BJ (cell line): ENCODE measurements at regions of chr11 and their contacts with region 1.

Region 1: DNA sequence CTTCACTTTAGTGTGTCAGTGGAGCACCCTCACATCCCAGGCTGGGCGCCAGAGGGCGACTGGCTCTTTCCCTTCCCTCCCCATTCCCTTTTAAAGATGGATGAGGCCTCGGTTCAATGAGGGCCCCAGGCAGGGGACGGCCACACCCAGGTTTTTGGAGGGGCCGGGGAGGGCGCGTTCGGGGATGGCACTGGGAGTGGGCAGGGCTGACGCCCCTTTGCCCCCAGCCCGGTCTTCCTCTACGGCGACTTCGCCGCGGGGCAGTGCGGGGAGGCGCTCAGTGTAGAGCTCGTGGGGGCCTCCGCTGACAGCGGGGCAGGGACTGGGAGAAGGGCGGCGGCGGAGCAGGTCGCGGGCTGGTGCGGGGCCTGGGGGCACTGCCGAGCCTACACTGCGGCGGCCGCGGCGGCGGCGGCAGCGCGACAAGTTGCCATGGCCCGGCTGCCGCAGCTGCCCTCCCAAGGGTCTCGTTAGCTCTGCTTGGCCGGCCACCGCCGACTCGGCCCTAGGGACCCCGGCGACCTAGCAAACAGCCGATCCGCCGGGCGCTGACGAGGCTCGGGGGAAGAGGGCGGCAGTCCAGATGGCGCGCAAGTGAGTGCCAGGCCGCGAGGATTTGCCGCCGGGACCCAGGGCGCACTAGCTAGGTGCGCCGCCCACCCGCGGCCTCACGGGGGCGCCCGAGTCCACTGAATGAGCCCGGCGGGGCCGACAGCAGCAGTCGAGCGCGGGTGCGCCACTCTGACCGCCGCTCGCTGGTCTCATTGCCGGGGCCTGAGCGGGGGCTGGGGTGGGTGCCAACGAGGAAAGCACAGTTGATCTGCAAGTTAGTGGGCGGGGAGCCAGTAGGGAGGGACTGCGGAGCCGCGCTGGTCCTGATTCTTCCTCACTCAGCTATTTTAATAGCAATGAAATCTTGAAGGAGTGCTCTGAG is 92.7 kb downstream of the RRM1 start:
- DNase-seq: peak; percentile 39
- H3K4me3 ChIP-seq: peak overlapping the region; percentile 60
- H3K27me3 ChIP-seq: no peaks in the 10 kb centered on the region
- CTCF ChIP-seq: peak; percentile 83

Region 2: DNA sequence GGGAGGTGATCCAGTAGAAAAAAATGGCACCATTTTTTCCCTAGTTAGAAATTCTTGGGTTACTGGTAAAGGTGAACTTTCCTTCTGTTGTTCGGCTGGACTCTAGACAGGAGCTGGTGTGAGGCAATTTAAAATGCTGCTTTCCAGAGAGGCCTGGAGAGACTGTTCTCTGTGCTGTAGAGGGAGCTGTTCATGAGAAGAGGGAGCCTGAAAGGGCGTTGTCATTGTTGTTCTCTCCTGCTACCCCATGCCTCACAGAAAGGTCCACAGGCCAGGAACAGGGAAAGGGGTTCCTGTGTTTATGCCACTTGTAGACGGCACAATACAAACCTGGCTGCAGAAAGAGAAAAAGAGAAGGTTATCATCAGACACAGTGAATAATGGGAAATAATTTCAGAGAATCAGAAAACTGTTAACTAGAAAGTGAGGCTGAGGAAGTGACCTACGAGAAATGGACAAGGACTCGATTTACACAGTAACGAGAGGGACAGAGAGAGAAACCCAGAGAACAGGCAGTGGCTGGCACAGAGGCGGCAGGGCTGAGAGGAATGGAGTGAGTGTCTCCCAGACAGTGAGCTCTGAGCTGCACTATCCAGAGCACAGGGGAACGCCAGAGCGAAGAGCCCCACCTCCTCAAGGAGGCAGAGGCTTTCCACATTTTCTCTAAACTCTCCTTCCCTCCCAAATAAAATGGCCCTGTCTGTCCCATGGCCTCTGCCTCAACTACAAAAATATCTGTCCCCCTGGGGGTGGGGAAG is 16.5 kb after region 1 on chr11:
- CTCF ChIA-PET with region 1: interaction called, 27 read pairs
- POLR2A ChIA-PET with region 1: interaction called, 4 read pairs
- DNase-seq: no peak
- H3K4me3 ChIP-seq: no peak overlapping the region
- H3K27me3 ChIP-seq: no peaks in the 10 kb centered on the region
- CTCF ChIP-seq: no peak

Region 3: GRCh38 chr11:4490827-4491226 is 303.5 kb after region 1 on chr11:
- CTCF ChIA-PET with region 1: interaction called, 109 read pairs
- POLR2A ChIA-PET with region 1: no interaction called
- DNase-seq: no peak
- H3K4me3 ChIP-seq: no peak overlapping the region
- H3K27me3 ChIP-seq: 0 out of 2 replicates have a peak, but pooled peaks cover 2% of the 10 kb centered on the region
- CTCF ChIP-seq: no peak

Region 4: GRCh38 chr11:4508886-4509285 is 321.6 kb after region 1 on chr11:
- CTCF ChIA-PET with region 1: interaction called, 18 read pairs
- POLR2A ChIA-PET with region 1: no interaction called
- DNase-seq: no peak
- H3K4me3 ChIP-seq: no peak overlapping the region
- H3K27me3 ChIP-seq: no peaks in the 10 kb centered on the region
- CTCF ChIP-seq: no peak

Region 5: DNA sequence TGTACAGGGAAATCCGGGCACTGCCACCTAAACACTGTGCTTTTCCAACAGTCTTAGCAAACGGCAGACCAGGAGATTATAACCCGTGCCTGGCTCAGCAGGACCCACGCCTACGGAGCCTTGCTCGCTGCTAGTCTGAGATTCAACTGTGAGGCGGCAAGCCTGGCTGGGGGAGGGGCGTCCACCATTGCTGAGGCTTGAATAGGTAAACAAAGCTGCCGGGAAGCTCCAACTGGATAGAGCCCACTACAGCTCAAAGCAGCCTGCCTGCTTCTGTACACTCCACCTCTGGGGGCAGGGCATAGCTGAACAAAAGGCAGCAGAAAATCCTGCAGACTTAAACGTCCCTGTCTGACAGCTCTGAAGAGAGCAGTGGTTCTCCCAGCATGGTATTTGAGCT is 344.4 kb after region 1 on chr11:
- CTCF ChIA-PET with region 1: interaction called, 32 read pairs
- POLR2A ChIA-PET with region 1: no interaction called
- DNase-seq: no peak
- H3K4me3 ChIP-seq: no peak overlapping the region
- H3K27me3 ChIP-seq: no peaks in the 10 kb centered on the region
- CTCF ChIP-seq: no peak

Region 6: GRCh38 chr11:4551346-4551979 is 364.1 kb after region 1 on chr11:
- CTCF ChIA-PET with region 1: interaction called, 23 read pairs
- POLR2A ChIA-PET with region 1: no interaction called
- DNase-seq: no peak
- H3K4me3 ChIP-seq: no peak overlapping the region
- H3K27me3 ChIP-seq: no peaks in the 10 kb centered on the region
- CTCF ChIP-seq: peak; percentile 39